K562 (cell line): ENCODE measurements at regions of chr1 and their contacts with region 1.

Region 1: GRCh38 chr1:205919026-205919746 is 24.1 kb downstream of the SLC26A9 start:
- DNase-seq: peak; percentile 80 to 87 (median 84)
- ATAC-seq: peak; percentile 95
- H3K4me3 ChIP-seq: no peak overlapping the region
- H3K27ac ChIP-seq: no peak overlapping the region
- H3K4me1 ChIP-seq: no peaks in the 10 kb centered on the region
- H3K27me3 ChIP-seq: peaks cover 30 to 75% of the 10 kb centered on the region in 2 experiments
- CTCF ChIP-seq: peak; percentile 90 to 97 (median 94)
- EP300 ChIP-seq: no peak
- POLR2A ChIP-seq: no peak
- RAD21 ChIP-seq: peak; percentile 96 to 99

Region 2: DNA sequence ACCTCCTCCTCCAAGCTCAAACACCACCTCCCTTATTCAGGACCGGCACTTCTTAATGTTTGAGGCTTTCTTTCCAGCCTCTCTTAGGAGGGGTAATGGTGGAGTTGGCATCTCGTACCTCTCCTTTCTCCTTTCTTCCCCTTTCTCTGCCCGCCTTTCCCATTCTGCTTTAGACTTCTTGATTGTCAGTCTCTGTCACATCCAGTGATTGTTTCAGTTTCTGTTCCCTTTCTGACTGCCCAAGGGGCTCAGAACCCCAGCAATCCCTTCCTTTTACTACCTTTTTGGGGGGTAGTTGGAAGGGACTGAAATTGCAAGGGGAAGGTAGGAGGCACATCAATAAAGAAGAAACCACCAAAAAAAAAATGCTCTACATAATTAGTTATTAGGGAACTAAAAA is 293.0 kb before region 1 on chr1:
- CTCF ChIA-PET with region 1: no interaction called
- POLR2A ChIA-PET with region 1: no interaction called
- in situ Hi-C with region 1: no loop called
- intact Hi-C with region 1: no loop called
- DNase-seq: no peak
- ATAC-seq: no peak
- H3K4me3 ChIP-seq: no peak overlapping the region
- H3K27ac ChIP-seq: no peak overlapping the region
- H3K4me1 ChIP-seq: peaks cover 6 to 9% of the 10 kb centered on the region in 2 experiments; a peak in 4 of 5 replicates
- H3K27me3 ChIP-seq: no peaks in the 10 kb centered on the region
- CTCF ChIP-seq: no peak
- EP300 ChIP-seq: no peak
- POLR2A ChIP-seq: no peak
- RAD21 ChIP-seq: no peak

Region 3: DNA sequence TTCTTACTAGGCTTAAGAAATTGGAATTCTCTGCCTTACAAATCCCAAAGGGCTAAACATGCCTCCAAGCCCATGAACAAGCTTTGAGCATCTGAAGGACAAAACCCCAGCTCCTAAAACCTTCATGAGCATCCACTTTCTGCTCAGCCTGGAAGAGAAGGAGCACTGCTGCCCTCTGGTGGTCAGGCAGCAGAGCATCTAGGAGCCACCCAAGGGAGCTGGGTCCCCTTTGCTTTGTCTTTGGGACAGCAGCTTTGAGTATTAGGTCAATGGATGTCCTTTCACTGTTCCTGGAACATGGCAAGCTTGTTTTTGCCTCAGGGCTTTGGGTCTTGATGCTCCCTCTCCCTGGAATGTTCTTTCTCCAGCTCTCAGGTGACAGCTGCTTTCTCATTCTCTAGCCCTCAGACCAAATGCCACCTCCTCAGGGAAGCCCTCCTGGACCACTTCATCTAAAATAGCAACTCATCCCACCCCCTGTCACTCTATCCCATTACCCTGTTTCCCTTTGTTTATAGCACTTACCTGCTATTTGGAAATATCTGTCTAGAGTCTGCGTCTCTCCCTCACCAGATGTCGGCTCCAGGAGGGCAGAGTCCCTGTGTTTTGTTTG is 58.3 kb after region 1 on chr1:
- CTCF ChIA-PET with region 1: interaction called, 114 read pairs
- POLR2A ChIA-PET with region 1: interaction called, 6 read pairs
- in situ Hi-C with region 1: no loop called
- intact Hi-C with region 1: loop called (anchors 1 kb)
- DNase-seq: peak; percentile 79 to 92 (median 88)
- ATAC-seq: peak; percentile 97
- H3K4me3 ChIP-seq: no peak overlapping the region
- H3K27ac ChIP-seq: no peak overlapping the region
- H3K4me1 ChIP-seq: peaks cover 0 to 4% of the 10 kb centered on the region in 2 experiments; a peak in 1 of 5 replicates
- H3K27me3 ChIP-seq: peaks cover 22 to 41% of the 10 kb centered on the region in 2 experiments
- CTCF ChIP-seq: peak; percentile 96 to 98 (median 98)
- EP300 ChIP-seq: no peak
- POLR2A ChIP-seq: no peak
- RAD21 ChIP-seq: peak; percentile 99 to 100